AG04449 (cell line): ENCODE measurements at regions of chr17 and their contacts with region 1.

Region 1: GRCh38 chr17:50037321-50038071 is 18.4 kb upstream of the ITGA3 start:
- DNase-seq: no peak
- H3K4me3 ChIP-seq: no peak overlapping the region
- CTCF ChIP-seq: no peak

Region 2: DNA sequence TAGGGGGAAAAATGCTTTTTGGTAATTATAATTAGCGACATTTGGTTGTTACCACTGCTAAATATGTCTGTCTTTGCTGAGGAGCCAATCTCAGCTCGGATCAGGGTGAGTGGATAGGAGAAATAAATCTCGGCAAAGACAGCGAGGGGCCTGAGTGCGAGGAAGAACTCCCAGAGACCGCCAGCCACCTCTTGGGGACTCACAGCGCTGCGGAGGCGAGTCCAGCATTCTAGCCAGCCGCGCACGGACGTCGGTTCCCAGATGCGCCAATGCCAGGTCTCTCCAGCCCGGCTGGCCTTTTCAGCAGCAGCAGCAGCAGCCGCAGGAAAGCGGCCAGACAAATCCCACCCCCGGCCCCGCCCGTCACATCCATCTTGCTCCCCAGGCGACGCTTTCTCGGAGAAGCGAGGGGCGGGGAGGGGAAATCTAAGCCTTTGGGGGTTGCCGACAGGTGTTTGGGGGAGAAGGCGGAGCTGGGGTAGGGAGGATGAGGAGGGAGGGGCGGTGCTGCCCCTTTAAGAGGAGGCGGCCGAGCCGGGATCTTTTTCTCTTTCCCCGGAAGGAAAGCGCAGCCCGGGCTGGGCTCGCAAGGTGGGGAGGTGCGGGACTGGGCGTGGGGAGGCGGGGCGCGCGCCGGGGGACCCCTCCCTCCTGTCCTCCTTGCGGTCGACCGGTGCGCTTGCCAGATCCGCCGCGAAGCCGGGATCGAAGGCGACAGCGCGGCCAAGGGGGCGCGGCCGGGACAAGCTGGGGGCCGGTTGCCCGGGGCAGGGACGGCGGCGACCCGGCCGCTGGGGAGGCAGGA is 18.1 kb after region 1 on chr17 and contains the start of gene ITGA3:
- CTCF ChIA-PET with region 1: interaction called, 179 read pairs
- POLR2A ChIA-PET with region 1: interaction called, 3 read pairs
- DNase-seq: no peak
- H3K4me3 ChIP-seq: peak within 1 kb of the TSS; percentile 78
- CTCF ChIP-seq: no peak

Region 3: DNA sequence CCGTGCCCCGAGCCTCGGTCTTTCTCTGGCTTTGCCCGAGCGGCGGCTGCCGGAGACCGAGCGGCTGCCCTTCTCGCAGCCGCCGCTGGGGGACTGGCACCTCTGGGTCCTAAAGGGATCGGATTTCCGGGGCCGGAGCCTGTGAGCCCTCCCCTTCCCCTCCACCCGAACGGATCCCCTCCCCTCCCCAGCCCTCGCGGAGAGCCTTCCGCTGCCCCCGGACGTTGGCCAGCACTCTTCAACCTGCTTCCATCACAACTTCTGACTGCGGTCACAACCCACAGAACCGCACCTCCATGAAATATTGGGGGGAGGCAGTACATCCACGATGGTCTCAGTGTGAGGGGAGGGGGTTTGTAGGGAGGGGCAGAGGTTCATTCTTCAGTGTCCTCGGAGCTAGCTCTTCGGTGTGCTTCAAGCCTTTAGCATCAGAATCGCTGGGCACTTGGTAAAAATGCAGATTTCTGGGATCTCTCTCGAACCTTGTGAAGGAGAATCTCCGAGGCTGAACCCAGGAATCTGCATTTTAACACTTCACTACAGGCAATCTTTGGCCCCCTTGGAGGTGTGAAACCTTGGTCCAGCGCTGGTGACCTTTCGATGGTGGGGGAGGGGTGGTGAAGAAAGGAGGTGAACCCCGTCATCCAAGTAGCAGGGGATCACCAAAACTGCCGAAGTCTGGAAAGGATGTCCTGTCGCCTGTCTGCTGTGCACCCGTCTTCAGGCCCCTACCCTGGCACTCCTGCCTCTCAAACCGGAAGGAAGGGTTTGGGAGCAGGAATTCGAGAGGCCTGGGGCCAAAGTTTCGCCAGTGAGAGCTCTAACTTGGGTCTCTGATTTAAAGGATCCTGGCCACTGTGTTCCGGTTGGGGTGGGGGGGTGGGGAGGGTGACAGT is 113.8 kb after region 1 on chr17:
- CTCF ChIA-PET with region 1: no interaction called
- POLR2A ChIA-PET with region 1: no interaction called
- DNase-seq: no peak
- H3K4me3 ChIP-seq: peak overlapping the region; percentile 77
- CTCF ChIP-seq: peak; percentile 81

Region 4: DNA sequence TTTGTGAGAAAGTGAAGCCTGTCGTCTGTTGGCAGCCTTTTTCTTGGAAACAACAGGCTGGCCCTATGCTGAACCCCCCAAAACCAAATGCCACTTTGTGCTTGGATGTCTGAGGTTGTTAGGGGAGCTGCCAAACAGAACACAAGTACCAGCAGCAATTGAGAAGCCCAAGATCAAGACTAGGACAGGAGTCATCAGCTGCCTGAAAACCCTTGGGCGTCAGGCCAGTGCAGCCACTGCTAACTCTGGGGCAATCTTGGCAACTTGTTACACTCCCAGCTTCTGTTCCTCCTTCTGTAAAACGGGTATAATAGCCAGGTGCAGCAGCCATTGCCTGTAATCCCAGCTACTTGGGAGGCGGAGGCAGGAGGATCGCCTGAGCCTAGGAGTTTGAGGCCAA is 369.1 kb after region 1 on chr17:
- CTCF ChIA-PET with region 1: no interaction called
- POLR2A ChIA-PET with region 1: no interaction called
- DNase-seq: no peak
- H3K4me3 ChIP-seq: no peak overlapping the region
- CTCF ChIP-seq: no peak

Region 5: DNA sequence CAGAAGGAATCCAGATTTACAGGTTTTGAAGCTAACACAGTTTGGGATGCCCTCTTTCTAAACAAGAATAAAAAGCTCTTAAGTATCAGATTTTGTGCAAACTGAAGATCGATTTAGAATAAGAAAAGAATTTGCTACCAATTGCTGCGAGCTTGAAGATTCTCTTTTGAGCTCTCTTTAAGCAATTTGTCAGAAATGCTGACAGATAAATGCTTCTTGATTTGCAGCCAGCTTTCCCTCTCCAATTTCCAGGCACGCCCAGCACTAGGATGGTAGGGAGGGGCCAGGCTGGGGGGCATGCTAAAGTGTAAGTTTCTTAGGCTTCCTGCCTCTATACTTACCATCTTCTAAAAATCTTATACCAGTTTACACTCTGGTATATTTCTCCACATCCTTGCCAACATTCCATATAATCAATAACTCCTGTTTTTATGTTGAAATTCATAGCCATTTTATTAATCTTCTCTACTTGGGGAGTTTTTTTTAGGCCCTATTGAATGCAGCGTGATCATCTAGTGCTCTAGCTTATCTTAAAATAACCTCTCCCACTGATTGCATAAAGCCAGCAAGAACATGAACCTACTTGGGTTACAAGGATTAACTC is 406.0 kb after region 1 on chr17:
- CTCF ChIA-PET with region 1: no interaction called
- POLR2A ChIA-PET with region 1: no interaction called
- DNase-seq: no peak
- H3K4me3 ChIP-seq: no peak overlapping the region
- CTCF ChIP-seq: no peak